Right ventricle myocardium superior (tissue), 1 donor: ENCODE measurements at regions of chr15 and their contacts with region 1.

Region 1: DNA sequence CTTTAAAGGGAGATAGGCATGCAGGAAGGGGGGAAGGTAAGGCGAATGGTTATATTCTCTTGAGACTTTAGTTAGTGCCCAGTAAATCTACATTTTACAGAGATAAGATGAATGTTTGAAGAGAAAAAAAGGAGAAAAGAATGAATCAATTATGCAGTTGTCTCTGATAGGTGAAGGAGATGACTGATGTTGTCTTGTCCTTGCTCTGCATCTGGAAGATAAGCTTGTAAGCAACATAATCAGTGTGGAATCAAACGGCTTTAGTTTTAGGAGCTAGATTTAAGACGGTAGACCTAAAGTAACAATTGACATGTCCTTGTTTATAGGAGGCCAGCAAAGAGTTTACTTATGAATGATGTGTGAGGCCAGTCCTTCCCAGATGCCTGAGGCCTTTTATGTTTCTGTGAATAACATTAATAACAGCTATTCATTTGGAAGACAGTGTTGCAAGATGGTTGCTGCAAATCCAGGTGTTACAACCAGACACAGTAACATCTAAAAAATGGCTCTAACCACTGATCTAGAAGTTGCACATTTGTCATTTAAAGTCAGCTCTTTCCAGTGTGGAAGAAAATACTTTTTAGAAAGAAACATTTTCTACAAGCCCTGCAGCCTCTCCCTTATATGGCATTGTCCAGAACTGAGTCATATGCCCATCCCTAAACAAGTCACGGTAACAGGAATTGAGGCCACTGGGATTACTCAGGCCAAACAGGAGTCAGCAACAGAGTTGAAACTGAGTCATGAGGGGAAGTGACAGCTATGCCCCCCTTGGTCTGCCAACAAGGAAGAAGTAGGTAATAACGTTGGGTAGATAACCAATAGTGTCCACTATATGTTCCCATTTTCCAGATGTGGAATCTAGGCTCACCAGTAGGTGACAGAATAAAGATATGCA is 77.5 kb upstream of the FBN1 start:
- DNase-seq: no peak
- ATAC-seq: no peak

Region 2: DNA sequence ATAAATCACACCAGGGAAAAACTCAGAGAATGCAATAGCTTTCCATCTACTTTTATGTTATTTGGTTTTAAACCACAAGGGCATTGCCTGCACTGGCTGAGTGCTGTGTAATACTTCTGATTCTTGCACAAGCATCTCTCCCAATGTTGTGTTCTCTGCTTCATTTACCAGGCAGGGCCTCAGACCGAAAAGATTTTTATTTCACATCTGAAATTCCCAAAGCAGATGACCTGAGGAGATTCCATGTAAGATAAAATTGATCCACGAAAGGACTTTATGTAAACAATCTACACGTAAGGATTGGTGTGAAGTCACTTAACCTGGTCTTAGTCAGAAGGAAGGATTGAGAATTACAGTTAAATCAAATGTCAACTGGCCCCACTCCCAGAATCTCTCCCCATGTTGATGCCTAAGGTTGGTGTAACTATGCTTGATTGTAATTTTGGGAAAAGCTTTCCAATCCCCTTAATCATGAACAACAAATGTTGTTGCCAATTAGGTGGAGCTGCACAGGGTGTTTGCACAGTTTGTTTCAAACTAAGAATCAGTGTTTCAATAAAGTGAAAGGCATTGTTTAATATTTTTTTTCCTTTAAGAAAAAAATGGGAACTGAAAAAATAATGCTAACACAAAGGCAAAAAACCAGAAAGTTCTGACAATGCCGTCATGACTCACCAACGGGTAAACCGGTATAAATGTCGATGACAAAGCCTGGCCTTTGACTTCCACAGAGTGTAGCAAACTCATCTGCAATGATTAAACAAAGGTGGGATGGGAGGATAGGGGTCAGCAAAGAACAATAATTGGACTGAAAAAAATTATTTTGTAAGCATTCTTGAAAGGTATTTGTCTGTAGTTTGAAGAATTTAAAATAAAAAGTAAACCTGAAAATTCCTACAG is 263.2 kb before region 1 on chr15:
- intact Hi-C with region 1: loop called (anchors 5 kb)
- DNase-seq: no peak
- ATAC-seq: peak; percentile 46

Region 3: DNA sequence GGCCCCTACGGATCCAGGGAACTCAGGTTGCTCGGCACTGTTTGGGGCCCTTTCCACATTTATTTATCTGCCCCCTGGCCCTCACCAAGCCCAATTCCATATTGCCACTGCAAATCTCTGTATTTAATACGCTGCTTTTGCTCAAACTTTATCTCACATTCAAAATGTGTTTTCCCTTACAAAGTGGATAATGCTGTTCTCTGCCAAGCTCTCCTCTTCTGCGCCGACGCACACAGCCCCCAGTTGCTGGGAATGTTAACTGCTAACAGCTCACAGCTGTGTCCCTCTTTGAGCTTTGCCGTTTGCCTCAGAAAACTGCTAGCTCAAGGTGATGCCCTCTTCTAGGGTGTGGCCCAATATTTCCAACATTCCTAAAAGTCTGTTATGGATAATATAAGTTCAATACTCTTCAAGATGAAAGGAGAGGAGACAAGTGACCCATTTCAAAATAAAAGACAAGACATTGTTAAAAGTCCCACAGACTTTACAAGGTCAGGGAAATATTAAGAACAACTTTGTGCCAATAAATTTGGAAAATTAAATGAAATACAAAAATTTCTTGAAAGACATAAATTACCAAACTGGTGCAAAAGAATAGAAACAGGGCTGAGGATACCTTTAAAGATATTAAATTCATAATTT is 64.9 kb before region 1 on chr15:
- intact Hi-C with region 1: loop called (anchors 10 kb)
- DNase-seq: peak; percentile 61
- ATAC-seq: peak; percentile 52